ENCODE measurements at regions of chr17 and their contacts with region 1.

Region 1: GRCh38 chr17:68179926-68180285 is 67.9 kb upstream of the AMZ2 start:
- DNase-seq: no peak
- H3K4me3 Mint-ChIP-seq: no peak overlapping the region
- H3K27ac Mint-ChIP-seq: no peak overlapping the region
- H3K4me1 Mint-ChIP-seq: peaks cover 51% of the 10 kb centered on the region
- H3K27me3 Mint-ChIP-seq: peaks cover 7% of the 10 kb centered on the region

Region 2: GRCh38 chr17:68238164-68238872 is 58.4 kb after region 1 on chr17:
- intact Hi-C with region 1: loop called (anchors 2 kb)
- DNase-seq: no peak
- H3K4me3 Mint-ChIP-seq: peak overlapping the region; percentile 82
- H3K27ac Mint-ChIP-seq: peak overlapping the region; percentile 95
- H3K4me1 Mint-ChIP-seq: peaks cover 53% of the 10 kb centered on the region
- H3K27me3 Mint-ChIP-seq: no peaks in the 10 kb centered on the region

Region 3: GRCh38 chr17:68247445-68248198 is 67.7 kb after region 1 on chr17 and contains the start of gene AMZ2:
- intact Hi-C with region 1: loop called (anchors 1 kb)
- DNase-seq: peak; percentile 98
- H3K4me3 Mint-ChIP-seq: peak within 1 kb of the TSS; percentile 88
- H3K27ac Mint-ChIP-seq: peak within 1 kb of the TSS; percentile 96
- H3K4me1 Mint-ChIP-seq: peaks cover 49% of the 10 kb centered on the region
- H3K27me3 Mint-ChIP-seq: no peaks in the 10 kb centered on the region
- total RNA-seq, gene AMZ2: 67.3 and 75.7 TPM in 2 replicates